ENCODE measurements at regions of chr6 and their contacts with region 1.

Region 1: GRCh38 chr6:75526502-75527127 is 33.0 kb upstream of the FILIP1 start:
- DNase-seq: peak; percentile 68
- ATAC-seq: peak; percentile 76
- H3K4me3 Mint-ChIP-seq: no peak overlapping the region
- H3K27ac Mint-ChIP-seq: no peak overlapping the region
- H3K4me1 Mint-ChIP-seq: no peaks in the 10 kb centered on the region
- H3K27me3 Mint-ChIP-seq: peaks cover 16% of the 10 kb centered on the region

Region 2: DNA sequence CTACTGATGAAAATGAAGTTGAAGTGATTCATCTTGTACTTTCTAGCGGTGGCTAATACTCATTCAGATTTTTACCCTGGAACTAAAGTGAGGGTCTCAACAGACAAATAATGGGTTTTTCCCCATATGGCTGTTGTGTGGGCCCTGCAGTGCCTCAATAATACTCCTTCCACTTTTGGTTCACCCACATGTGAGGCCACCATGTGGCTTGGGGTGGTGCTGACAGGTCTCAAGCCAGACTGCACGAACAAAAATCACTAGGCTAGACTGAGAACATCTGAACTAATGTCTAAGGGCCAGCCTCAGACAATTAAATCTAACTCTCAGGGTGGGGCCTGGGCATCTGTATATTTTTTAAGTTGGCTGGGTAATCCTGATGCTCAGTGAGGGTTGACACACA is 312.9 kb before region 1 on chr6:
- CTCF ChIA-PET with region 1: no interaction called
- POLR2A ChIA-PET with region 1: no interaction called
- intact Hi-C with region 1: loop called (anchors 2 kb)
- DNase-seq: peak; percentile 17
- ATAC-seq: no peak
- H3K4me3 Mint-ChIP-seq: no peak overlapping the region
- H3K27ac Mint-ChIP-seq: no peak overlapping the region
- H3K4me1 Mint-ChIP-seq: peaks cover 11% of the 10 kb centered on the region
- H3K27me3 Mint-ChIP-seq: peaks cover 36% of the 10 kb centered on the region

Region 3: DNA sequence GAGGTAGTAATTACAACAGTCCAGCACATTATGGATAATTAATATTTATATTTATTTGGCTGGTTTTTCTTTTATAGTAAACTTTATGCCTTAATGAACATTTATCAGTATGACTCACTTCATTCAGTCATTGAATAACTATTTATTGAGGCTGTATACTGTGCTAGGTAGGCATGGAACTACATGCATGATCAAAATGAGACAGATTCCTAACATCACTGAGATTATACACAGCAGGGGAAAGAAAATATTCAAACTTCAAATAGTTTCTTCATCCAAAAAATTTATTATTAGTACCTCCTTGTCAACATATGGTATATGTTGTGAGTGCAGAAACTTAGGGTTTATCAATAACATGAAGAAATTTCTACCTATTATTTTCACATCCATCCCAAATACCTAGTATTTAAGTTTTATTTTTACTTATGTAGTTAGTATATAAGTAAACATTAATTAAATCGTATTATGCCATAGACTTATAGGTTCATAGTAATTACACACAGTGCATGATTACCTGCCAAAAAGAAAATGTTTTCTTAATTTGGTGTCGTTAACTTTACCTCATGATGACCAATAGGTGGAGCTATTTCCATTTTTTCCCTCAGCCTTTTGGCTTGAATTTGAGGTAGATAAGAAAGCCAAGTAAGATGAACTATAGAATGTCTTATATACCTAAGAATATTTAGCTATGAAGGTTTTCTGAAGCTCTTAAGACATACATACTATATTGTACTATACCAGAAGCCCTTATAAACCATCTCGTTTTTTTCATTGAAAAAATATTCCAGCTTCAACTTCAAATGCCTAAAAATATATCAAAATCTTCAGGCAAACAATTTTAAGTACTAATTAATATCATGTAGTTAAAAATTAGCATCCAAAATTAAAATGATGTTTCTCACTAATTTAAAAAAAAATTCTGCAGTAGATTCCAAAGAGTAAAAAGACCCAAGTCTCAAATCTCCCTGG is 229.5 kb before region 1 on chr6:
- CTCF ChIA-PET with region 1: interaction called, 10 read pairs
- POLR2A ChIA-PET with region 1: no interaction called
- intact Hi-C with region 1: loop called (anchors 1 kb)
- DNase-seq: no peak
- ATAC-seq: peak; percentile 42
- H3K4me3 Mint-ChIP-seq: no peak overlapping the region
- H3K27ac Mint-ChIP-seq: no peak overlapping the region
- H3K4me1 Mint-ChIP-seq: no peaks in the 10 kb centered on the region
- H3K27me3 Mint-ChIP-seq: no peaks in the 10 kb centered on the region

Region 4: DNA sequence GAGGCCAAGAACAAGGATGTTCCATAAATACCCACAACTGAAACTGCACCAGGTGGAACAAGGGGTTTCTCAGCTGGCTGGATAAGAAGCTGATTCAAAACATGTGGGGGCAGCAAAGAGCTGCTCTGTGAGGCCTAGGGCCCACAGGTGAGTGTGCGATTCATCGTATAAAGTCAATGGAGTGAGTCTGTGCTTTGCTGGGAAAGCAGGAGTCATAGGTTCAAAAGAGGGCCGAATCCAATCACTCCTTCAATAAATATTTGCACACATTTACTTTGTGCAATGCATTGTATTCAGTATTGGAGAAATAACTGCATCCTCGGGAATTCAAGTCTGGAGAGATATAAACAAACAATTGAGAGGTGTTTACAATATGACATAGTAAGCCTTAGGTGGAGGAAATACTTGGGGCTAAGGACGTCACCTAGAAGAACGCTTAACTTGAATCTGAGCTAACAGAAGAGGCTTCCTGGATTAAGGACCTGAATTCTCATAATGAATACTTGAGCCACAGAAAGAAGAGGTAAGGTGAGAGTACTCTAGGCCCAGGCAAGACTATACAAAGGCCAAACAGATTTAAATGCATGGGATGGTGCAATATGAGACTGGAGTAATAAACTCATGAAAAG is 158.3 kb before region 1 on chr6:
- CTCF ChIA-PET with region 1: no interaction called
- POLR2A ChIA-PET with region 1: no interaction called
- intact Hi-C with region 1: loop called (anchors 5 kb)
- DNase-seq: peak; percentile 22
- ATAC-seq: no peak
- H3K4me3 Mint-ChIP-seq: no peak overlapping the region
- H3K27ac Mint-ChIP-seq: no peak overlapping the region
- H3K4me1 Mint-ChIP-seq: no peaks in the 10 kb centered on the region
- H3K27me3 Mint-ChIP-seq: peaks cover 5% of the 10 kb centered on the region

Measured in activated CD4-positive, alpha-beta T cell treated with anti-CD3 and anti-CD28 coated beads for 36 hours (primary cell).